Activated T-helper 2 cell treated with anti-CD3 and anti-CD28 coated beads, Interferon-gamma antibody, Interleukin-2, Interleukin-4, amounts not matched to agents 10 μg/mL and 5 μg/mL and 100 μg/mL, durations not matched to agents 14 hours and 24 hours and 36 hours (primary cell): ENCODE measurements at regions of chr2 and their contacts with region 1.

Region 1: DNA sequence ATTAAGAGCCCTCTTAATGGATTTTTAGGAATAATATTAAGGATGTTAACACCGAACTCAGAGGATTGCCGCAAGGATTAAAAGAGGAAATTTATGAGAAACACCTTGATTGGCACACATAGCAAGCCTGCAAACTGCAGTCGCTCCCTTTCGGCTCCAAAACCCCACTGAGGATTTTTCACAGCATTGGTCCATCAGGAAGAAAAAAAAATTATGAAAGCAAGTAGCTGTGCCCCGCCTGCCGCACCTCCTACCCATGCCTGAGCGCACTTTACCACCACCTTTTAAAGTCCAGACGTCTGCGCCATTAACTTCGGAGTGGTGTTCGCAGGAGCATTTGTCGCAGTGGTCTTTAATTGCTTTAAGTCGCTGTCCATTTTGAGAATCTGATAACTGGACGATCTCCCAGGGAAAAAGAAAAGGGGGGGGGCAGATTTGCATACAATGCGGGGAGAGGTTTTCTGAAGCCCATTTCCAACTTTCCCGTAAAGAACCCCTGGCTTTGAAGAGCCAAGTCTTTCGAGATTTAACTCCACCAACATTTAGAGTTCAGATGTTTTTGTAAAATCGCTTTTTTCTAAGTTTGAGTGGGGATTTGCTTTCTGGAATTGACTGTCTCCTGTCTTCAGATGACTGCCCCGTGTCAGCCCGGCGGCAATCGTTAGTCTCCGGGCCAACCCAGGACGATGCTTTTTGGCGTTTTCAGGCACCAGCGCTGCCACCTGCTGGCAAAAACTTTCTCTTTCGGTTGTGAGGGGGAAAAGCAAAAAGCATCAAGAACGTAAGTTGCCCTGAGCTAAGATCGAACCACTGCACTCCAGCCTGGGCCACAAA is 914 bp upstream of the TRABD2A start:
- DNase-seq: peak; percentile 82
- H3K4me3 Mint-ChIP-seq: peak overlapping the region; percentile 91
- H3K27ac Mint-ChIP-seq: peak overlapping the region; percentile 95
- H3K4me1 Mint-ChIP-seq: peaks cover 48% of the 10 kb centered on the region
- H3K27me3 Mint-ChIP-seq: no peaks in the 10 kb centered on the region

Region 2: GRCh38 chr2:84495539-84496146 is 386.2 kb before region 1 on chr2:
- intact Hi-C with region 1: loop called (anchors 1 kb)
- DNase-seq: no peak
- H3K4me3 Mint-ChIP-seq: no peak overlapping the region
- H3K27ac Mint-ChIP-seq: no peak overlapping the region
- H3K4me1 Mint-ChIP-seq: peaks cover 6% of the 10 kb centered on the region
- H3K27me3 Mint-ChIP-seq: peaks cover 5% of the 10 kb centered on the region

Region 3: GRCh38 chr2:84781942-84782716 is 99.7 kb before region 1 on chr2:
- intact Hi-C with region 1: loop called (anchors 2 kb)
- DNase-seq: peak; percentile 57
- H3K4me3 Mint-ChIP-seq: no peak overlapping the region
- H3K27ac Mint-ChIP-seq: peak overlapping the region; percentile 87
- H3K4me1 Mint-ChIP-seq: peaks cover 66% of the 10 kb centered on the region
- H3K27me3 Mint-ChIP-seq: no peaks in the 10 kb centered on the region

Region 4: DNA sequence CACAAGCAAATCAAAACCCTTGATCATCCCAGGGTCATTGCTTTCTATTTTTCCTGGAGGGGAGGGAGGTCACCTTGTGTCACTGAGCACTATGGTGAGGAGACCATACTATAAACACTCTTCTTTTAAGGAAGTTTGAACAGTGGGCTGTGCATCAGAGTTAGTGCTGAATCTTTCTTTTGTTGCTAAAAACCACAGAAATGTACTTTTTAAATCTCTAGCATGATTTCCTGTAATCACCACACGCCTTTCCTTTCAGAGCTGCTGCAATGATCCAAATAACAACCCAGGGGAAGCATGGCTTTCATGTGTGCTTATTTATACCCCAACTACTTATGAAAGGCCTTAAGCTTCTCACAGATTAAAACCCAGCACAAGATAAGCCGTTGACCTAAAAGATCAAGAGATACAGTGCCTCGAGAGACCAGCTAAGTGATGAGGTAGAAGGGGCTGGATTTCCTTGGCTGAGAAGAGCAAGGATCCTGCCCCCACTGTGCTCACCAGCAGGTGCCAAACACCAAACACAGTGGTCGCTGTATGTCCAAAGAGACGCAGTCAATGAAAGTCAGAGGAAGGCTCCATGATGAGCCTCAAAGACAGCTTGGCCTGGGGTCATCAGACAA is 35.6 kb before region 1 on chr2:
- intact Hi-C with region 1: loop called (anchors 2 kb)
- DNase-seq: peak; percentile 46
- H3K4me3 Mint-ChIP-seq: peak overlapping the region; percentile 48
- H3K27ac Mint-ChIP-seq: peak overlapping the region; percentile 87
- H3K4me1 Mint-ChIP-seq: peaks cover 77% of the 10 kb centered on the region
- H3K27me3 Mint-ChIP-seq: no peaks in the 10 kb centered on the region

Region 5: GRCh38 chr2:84905181-84906107 is 23.6 kb after region 1 on chr2 and contains the start of gene TMSB10:
- intact Hi-C with region 1: loop called (anchors 1 kb)
- DNase-seq: peak; percentile 90
- H3K4me3 Mint-ChIP-seq: peak within 1 kb of the TSS; percentile 83
- H3K27ac Mint-ChIP-seq: peak within 1 kb of the TSS; percentile 76
- H3K4me1 Mint-ChIP-seq: peaks cover 46% of the 10 kb centered on the region
- H3K27me3 Mint-ChIP-seq: no peaks in the 10 kb centered on the region
- total RNA-seq, gene TMSB10: 2,676 and 2,847 TPM in 2 replicates